WTC11 (cell line): ENCODE measurements at regions of chr15 and their contacts with region 1.

Region 1: DNA sequence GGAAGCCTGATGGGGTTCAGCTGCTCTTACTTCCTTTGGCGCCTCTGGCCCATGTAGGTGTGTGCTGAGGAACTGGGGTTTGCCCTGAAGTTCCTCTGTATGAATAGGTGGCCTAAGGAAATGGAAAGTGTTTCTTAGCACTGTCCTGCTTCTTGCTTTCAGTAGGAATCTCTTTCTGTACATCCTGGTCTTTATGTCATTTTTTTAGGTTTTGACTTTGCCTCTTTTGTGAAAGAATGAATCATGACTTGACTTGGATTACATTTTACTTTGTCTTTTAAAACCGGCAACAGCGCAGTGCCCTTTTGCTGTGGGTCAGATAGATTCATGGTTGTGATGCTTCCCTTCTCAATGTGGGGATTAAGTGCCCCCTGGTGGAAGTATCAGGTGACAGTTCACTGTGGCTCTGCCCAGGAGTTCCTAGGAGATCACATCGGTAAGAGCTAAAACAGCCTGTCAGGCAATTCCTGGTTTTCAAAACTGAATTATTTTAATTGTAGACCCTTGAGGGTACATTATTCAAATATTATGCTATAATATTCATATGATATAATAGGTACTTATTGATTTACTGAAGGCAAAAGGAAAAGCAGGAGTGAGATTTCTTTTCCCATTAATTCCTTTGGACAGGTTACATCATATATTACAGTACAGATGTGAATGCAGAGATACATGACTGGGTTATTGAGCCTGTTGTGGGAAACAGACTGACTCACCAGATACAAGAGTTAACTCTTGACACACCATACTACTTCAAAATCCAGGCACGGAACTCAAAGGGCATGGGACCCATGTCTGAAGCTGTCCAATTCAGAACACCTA is 95.4 kb downstream of the HCN4 start:
- DNase-seq: peak; percentile 66
- ATAC-seq: peak; percentile 97
- H3K4me3 Mint-ChIP-seq: no peak overlapping the region
- H3K27ac Mint-ChIP-seq: no peak overlapping the region
- H3K4me1 Mint-ChIP-seq: peaks cover 3% of the 10 kb centered on the region; the same call in 1 of the 2 replicates
- H3K27me3 Mint-ChIP-seq: no peaks in the 10 kb centered on the region
- CTCF ChIP-seq: peak; percentile 44; the same call in 1 of the 2 replicates

Region 2: GRCh38 chr15:73240866-73241499 is 32.4 kb before region 1 on chr15:
- CTCF ChIA-PET with region 1: interaction called, 18 read pairs
- POLR2A ChIA-PET with region 1: no interaction called
- DNase-seq: peak; percentile 78
- ATAC-seq: 0 out of 2 replicates have a peak, but pooled peaks have one; percentile 28
- H3K4me3 Mint-ChIP-seq: no peak overlapping the region
- H3K27ac Mint-ChIP-seq: no peak overlapping the region
- H3K4me1 Mint-ChIP-seq: no peaks in the 10 kb centered on the region
- H3K27me3 Mint-ChIP-seq: no peaks in the 10 kb centered on the region
- CTCF ChIP-seq: peak; percentile 69

Region 3: DNA sequence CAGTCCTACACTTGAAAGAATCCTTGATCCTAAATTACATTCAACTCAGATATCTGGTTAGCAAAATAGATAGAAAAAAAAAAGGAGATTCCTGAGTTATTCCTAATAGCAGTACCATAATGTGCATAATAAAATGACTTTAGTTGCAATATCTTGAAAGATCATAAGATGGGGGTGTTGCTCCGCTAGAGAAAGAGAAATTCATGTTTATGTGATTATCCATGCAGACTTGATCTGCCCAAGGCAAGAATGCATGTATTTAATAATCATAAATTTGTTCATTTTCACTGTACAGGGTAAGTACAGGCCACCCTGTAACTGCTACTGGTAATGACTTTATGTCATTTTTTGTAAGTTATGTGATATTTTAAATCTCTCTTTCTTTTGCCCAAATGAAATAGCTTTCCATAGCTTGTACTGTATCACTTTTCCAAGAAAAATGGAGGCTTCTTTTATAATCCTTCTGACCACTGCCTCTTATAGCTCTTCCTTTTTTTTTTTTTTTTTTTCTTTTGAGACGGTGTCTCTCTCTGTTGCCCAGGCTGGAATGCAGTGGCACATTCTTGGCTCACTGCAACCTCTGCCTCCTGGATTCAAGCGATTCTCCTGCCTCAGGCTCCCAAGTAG is 10.8 kb after region 1 on chr15:
- CTCF ChIA-PET with region 1: interaction called, 10 read pairs
- POLR2A ChIA-PET with region 1: no interaction called
- DNase-seq: no peak
- ATAC-seq: no peak
- H3K4me3 Mint-ChIP-seq: no peak overlapping the region
- H3K27ac Mint-ChIP-seq: no peak overlapping the region
- H3K4me1 Mint-ChIP-seq: no peaks in the 10 kb centered on the region
- H3K27me3 Mint-ChIP-seq: no peaks in the 10 kb centered on the region
- CTCF ChIP-seq: no peak

Region 4: GRCh38 chr15:73518180-73518862 is 244.9 kb after region 1 on chr15:
- CTCF ChIA-PET with region 1: no interaction called
- POLR2A ChIA-PET with region 1: no interaction called
- DNase-seq: peak; percentile 31
- ATAC-seq: peak; percentile 97
- H3K4me3 Mint-ChIP-seq: no peak overlapping the region
- H3K27ac Mint-ChIP-seq: no peak overlapping the region
- H3K4me1 Mint-ChIP-seq: peaks cover 31% of the 10 kb centered on the region
- H3K27me3 Mint-ChIP-seq: peaks cover 4% of the 10 kb centered on the region
- CTCF ChIP-seq: no peak